ENCODE measurements at regions of chr3 and their contacts with region 1.

Region 1: GRCh38 chr3:124761250-124761796 is 31.1 kb downstream of the UMPS start:
- DNase-seq: peak; percentile 50 to 91
- H3K4me3 ChIP-seq: no peak overlapping the region
- H3K27ac ChIP-seq: no peak overlapping the region
- H3K4me1 ChIP-seq: peaks cover 0 to 3% (median 0%) of the 10 kb centered on the region in 4 experiments; a peak in 3 of 7 replicates
- H3K27me3 ChIP-seq: no peaks in the 10 kb centered on the region; a peak in 1 of 7 replicates
- CTCF ChIP-seq: peak; percentile 84 to 93 (median 90)
- EP300 ChIP-seq: no peak
- POLR2A ChIP-seq: no peak
- RAD21 ChIP-seq: peak; percentile 93 to 95

Region 2: DNA sequence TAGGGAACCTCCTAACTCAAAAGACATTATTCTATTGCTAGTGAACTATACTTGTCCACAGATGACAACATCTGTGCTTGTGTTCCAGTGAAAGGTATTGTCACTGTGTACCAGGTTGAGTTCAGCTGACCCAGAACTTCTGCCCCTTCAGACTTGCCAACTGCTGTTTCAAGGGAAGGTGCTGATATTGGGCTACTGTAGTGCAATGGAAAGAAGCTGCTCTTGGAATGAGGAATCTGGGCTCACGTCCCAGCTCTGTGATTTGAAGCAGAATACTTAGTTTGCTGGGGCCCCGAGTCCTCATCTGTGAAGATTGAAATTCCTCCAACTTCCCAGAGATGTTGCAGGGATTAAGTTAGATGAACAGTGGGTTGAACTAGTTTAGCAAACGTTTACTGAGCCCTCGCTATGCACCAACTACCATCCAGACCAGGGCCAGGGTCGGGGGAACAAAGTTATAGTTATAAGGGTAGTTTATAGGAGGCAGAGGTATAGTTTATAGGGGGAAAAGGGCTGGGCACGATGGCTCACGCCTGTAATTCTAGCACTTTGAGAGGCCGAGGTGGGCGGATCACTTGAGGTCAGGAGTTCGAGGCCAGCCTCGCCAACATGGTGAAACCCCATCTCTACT is 47.0 kb before region 1 on chr3:
- CTCF ChIA-PET with region 1: no interaction called
- POLR2A ChIA-PET with region 1: no interaction called
- DNase-seq: no peak
- H3K4me3 ChIP-seq: no peak overlapping the region
- H3K27ac ChIP-seq: no peak overlapping the region
- H3K4me1 ChIP-seq: no peaks in the 10 kb centered on the region
- H3K27me3 ChIP-seq: no peaks in the 10 kb centered on the region
- CTCF ChIP-seq: no peak
- EP300 ChIP-seq: no peak
- POLR2A ChIP-seq: no peak
- RAD21 ChIP-seq: no peak

Region 3: GRCh38 chr3:124747111-124747981 is 14.0 kb before region 1 on chr3:
- CTCF ChIA-PET with region 1: interaction called, 16 read pairs
- POLR2A ChIA-PET with region 1: interaction called, 11 read pairs
- DNase-seq: no peak
- H3K4me3 ChIP-seq: no peak overlapping the region
- H3K27ac ChIP-seq: no peak overlapping the region
- H3K4me1 ChIP-seq: peaks cover 0 to 3% (median 1%) of the 10 kb centered on the region in 4 experiments; a peak in 3 of 7 replicates
- H3K27me3 ChIP-seq: no peaks in the 10 kb centered on the region
- CTCF ChIP-seq: peak in 1 of 3 experiments; percentile 25; a peak in 1 of 4 replicates
- EP300 ChIP-seq: no peak
- POLR2A ChIP-seq: no peak
- RAD21 ChIP-seq: peak in 1 of 2 experiments; percentile 8; a peak in 1 of 4 replicates

Region 4: DNA sequence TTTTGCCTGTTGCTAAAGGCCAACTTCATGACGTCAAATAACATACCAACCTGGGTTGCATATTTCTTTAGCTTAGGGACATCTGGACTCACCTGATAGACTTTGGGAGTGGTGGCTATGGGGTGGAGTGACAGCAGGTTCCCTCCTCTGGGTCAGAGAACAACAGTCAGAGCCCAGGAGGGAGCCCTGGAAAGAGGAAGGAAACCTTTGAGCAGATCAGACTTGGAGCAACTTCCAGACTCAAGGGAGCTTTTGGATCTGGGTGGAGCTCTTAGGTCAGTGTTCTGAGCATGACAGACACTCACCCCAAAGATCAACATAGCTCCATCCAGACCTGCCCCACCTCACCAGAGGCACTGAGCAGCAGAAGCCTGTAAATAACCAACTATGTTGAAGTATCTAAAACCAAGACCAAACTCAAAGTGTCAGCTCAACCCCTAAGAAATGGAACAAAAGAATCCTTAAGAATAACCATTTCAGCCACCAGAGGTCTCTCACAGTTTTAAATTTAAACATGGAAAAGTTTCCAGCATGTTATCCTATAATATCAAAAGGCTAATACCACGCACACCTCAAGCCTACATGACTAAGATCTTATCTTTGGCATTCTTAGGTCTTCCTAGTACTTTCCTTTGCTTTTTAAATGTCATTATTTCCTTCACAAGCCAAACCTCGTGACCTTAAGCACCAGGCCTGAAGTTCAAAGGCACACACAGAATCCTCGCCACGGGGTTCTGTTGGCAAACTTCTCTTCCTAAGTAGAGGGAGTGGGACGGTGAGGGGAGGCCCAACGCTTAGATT is 25.3 kb after region 1 on chr3:
- CTCF ChIA-PET with region 1: interaction called, 33 read pairs
- POLR2A ChIA-PET with region 1: no interaction called
- DNase-seq: no peak
- H3K4me3 ChIP-seq: no peak overlapping the region
- H3K27ac ChIP-seq: 0 out of 2 replicates have a peak overlapping the region, but pooled peaks have one; percentile 4
- H3K4me1 ChIP-seq: peaks cover 0 to 1% (median 0%) of the 10 kb centered on the region in 4 experiments; a peak in 1 of 7 replicates
- H3K27me3 ChIP-seq: no peaks in the 10 kb centered on the region
- CTCF ChIP-seq: no peak; a peak in 1 of 4 replicates
- EP300 ChIP-seq: no peak
- POLR2A ChIP-seq: no peak
- RAD21 ChIP-seq: peak; percentile 26 to 29; a peak in 3 of 4 replicates

Region 5: GRCh38 chr3:124826703-124827102 is 65.4 kb after region 1 on chr3:
- CTCF ChIA-PET with region 1: interaction called, 12 read pairs
- POLR2A ChIA-PET with region 1: interaction called, 4 read pairs
- DNase-seq: peak in 1 of 2 experiments; percentile 41
- H3K4me3 ChIP-seq: peak overlapping the region in 1 of 4 experiments; percentile 23; a peak in 1 of 8 replicates
- H3K27ac ChIP-seq: peak overlapping the region; percentile 44; the same call in 1 of the 2 replicates
- H3K4me1 ChIP-seq: peaks cover 7 to 27% (median 21%) of the 10 kb centered on the region in 4 experiments
- H3K27me3 ChIP-seq: no peaks in the 10 kb centered on the region
- CTCF ChIP-seq: no peak
- EP300 ChIP-seq: no peak
- POLR2A ChIP-seq: 0 out of 3 replicates have a peak, but pooled peaks of 1 of the 2 experiments have one; percentile 45
- RAD21 ChIP-seq: no peak

Region 6: DNA sequence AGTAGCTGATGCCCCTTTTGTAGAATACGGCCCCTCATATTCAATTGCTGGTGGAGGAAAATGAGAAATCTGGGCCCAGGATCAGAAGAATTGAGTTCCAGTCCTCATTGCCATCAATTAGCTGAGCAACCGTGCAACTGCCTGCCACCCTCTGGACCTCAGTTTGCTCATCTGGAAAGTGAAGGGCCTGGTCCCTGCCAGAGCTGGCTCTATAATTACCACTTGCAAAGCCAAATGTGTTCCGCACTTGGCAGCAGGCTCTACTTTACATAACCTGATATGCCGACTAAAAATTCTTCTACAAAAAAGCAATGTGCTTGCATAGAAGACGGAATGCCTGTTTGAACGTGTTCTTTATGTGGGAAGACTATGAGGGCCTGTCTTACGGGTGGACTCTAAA is 134.4 kb after region 1 on chr3:
- CTCF ChIA-PET with region 1: interaction called, 173 read pairs
- POLR2A ChIA-PET with region 1: interaction called, 11 read pairs
- DNase-seq: no peak
- H3K4me3 ChIP-seq: no peak overlapping the region
- H3K27ac ChIP-seq: no peak overlapping the region
- H3K4me1 ChIP-seq: no peaks in the 10 kb centered on the region
- H3K27me3 ChIP-seq: no peaks in the 10 kb centered on the region
- CTCF ChIP-seq: no peak
- EP300 ChIP-seq: no peak
- POLR2A ChIP-seq: no peak
- RAD21 ChIP-seq: no peak

Region 7: DNA sequence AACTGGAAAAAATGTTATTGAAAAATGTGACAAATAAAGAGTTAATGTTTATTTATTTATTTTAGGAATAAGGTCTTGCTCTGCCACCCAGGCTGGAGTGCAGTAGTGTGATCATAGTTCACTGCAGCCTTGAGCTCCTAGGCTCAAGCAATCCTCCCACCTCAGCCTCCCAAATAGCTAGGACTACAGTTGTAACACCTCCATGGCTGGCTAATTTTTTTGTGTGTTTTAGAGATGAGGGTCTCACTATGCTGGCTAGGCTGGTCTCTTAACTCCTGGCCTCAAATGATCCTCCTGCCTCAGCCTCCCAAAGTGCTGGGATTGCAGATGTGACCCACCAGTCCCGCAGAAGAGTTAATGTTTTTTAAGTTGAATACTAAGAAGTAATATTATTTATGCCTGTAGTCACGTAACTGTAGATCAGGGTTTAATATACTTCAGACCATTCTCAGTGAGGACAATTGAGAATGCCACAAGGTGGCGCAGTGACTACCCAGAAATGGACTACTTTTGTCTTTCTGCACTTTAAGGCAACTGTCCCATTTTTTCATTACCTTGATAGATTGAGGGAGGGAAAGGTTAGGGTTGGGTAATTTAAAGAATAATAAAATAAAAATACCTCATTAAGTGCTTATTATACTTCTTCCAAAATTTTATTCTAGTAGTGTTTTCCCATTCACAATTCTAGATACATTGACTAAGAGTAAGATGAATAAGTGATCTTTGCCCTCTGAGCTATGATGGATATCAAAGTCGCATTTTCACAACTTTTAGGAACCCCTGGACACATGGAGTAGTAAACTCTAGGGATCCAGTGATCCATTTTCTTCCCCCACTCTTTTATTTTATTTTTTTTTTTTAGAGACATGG is 167.2 kb after region 1 on chr3:
- CTCF ChIA-PET with region 1: interaction called, 10 read pairs
- POLR2A ChIA-PET with region 1: interaction called, 8 read pairs
- DNase-seq: peak in 1 of 2 experiments; percentile 66
- H3K4me3 ChIP-seq: no peak overlapping the region
- H3K27ac ChIP-seq: no peak overlapping the region
- H3K4me1 ChIP-seq: no peaks in the 10 kb centered on the region
- H3K27me3 ChIP-seq: no peaks in the 10 kb centered on the region; a peak in 1 of 7 replicates
- CTCF ChIP-seq: peak in 2 of 3 experiments; percentile 71 to 81; a peak in 3 of 4 replicates
- EP300 ChIP-seq: no peak
- POLR2A ChIP-seq: no peak
- RAD21 ChIP-seq: peak; percentile 72 to 78

Region 8: GRCh38 chr3:125024817-125025216 is 263.5 kb after region 1 on chr3:
- CTCF ChIA-PET with region 1: no interaction called
- POLR2A ChIA-PET with region 1: no interaction called
- DNase-seq: no peak
- H3K4me3 ChIP-seq: no peak overlapping the region
- H3K27ac ChIP-seq: no peak overlapping the region
- H3K4me1 ChIP-seq: no peaks in the 10 kb centered on the region
- H3K27me3 ChIP-seq: no peaks in the 10 kb centered on the region
- CTCF ChIP-seq: no peak
- EP300 ChIP-seq: no peak
- POLR2A ChIP-seq: no peak
- RAD21 ChIP-seq: no peak

Measured in H1 (cell line).